A549 (cell line): ENCODE measurements at regions of chr5 and their contacts with region 1.

Region 1: GRCh38 chr5:136080483-136081216 is 51.9 kb downstream of the TGFBI start:
- DNase-seq: peak; percentile 43 to 85
- ATAC-seq: peak; percentile 62 to 63
- H3K4me3 ChIP-seq: peak overlapping the region; percentile 30
- H3K27ac ChIP-seq: peak overlapping the region; percentile 80 to 89
- H3K4me1 ChIP-seq: peaks cover 27% of the 10 kb centered on the region
- CTCF ChIP-seq: no peak
- EP300 ChIP-seq: no peak
- POLR2A ChIP-seq: peak; percentile 45
- RAD21 ChIP-seq: no peak

Region 2: DNA sequence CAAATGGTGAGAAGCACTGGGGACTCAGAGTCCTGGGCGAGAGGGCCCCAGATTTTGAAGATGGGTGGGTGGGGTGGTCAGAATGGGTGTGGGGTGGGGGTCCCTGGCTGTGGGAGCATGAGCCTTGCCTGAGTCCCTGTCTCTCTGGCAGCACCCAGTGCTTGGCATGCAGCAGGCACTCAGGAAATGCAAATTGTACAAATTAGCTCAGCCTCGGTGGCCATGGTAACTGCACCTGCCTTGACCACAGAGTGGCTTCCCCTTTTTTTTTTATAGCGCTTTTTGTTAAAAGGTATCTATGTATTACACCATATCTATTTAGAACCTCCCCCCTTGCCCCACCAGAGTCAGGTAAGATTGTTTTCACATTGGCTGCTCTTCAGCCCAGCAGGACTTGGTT is 1027.4 kb before region 1 on chr5:
- CTCF ChIA-PET with region 1: no interaction called
- POLR2A ChIA-PET with region 1: no interaction called
- DNase-seq: no peak
- ATAC-seq: no peak
- H3K4me3 ChIP-seq: no peak overlapping the region
- H3K27ac ChIP-seq: no peak overlapping the region
- H3K4me1 ChIP-seq: no peaks in the 10 kb centered on the region
- CTCF ChIP-seq: no peak
- EP300 ChIP-seq: no peak
- POLR2A ChIP-seq: no peak
- RAD21 ChIP-seq: no peak

Region 3: GRCh38 chr5:135880278-135880677 is 200.4 kb before region 1 on chr5:
- CTCF ChIA-PET with region 1: interaction called, 20 read pairs
- POLR2A ChIA-PET with region 1: no interaction called
- DNase-seq: peak; percentile 55 to 68
- ATAC-seq: peak; percentile 76 to 95
- H3K4me3 ChIP-seq: no peak overlapping the region
- H3K27ac ChIP-seq: peak overlapping the region in 1 of 2 experiments; percentile 40; a peak in 1 of 6 replicates
- H3K4me1 ChIP-seq: peaks cover 11% of the 10 kb centered on the region
- CTCF ChIP-seq: peak; percentile 56
- EP300 ChIP-seq: no peak
- POLR2A ChIP-seq: no peak
- RAD21 ChIP-seq: peak; percentile 58 to 82

Region 4: DNA sequence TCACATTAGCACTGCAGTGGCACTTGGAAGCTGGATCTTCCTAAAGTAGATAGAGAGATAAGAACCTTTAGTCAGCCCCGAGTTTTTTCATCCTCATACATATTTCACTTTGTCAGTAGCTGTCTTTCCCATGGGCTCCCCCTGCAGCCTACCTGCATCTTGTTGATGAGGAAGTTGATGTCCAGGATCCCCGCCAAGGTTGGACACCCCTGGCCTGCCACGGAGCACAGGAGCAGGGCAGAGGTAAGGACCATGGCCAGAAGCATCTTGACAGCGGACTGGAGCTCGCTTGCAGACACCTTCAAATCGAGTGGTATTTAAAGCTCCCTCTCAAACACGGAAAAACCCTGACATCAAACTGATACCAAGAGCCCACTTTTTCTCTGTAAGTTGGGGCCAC is 185.1 kb before region 1 on chr5 and contains the start of gene IL9:
- CTCF ChIA-PET with region 1: interaction called, 74 read pairs
- POLR2A ChIA-PET with region 1: no interaction called
- DNase-seq: no peak
- ATAC-seq: peak in 1 of 2 experiments; percentile 42; a peak in 3 of 6 replicates
- H3K4me3 ChIP-seq: no peak within 1 kb of the TSS
- H3K27ac ChIP-seq: peak within 1 kb of the TSS in 1 of 2 experiments; percentile 15; a peak in 2 of 6 replicates
- H3K4me1 ChIP-seq: peaks cover 25% of the 10 kb centered on the region
- CTCF ChIP-seq: no peak
- EP300 ChIP-seq: no peak
- POLR2A ChIP-seq: no peak
- RAD21 ChIP-seq: no peak
- polyA plus RNA-seq, gene IL9: not detected in 2 replicates

Region 5: GRCh38 chr5:136053336-136054141 is 27.1 kb before region 1 on chr5:
- CTCF ChIA-PET with region 1: interaction called, 10 read pairs
- POLR2A ChIA-PET with region 1: no interaction called
- DNase-seq: peak; percentile 94 to 95
- ATAC-seq: peak; percentile 54 to 73
- H3K4me3 ChIP-seq: 0 out of 3 replicates have a peak overlapping the region, but pooled peaks have one; percentile 17
- H3K27ac ChIP-seq: peak overlapping the region; percentile 86 to 93
- H3K4me1 ChIP-seq: peaks cover 94% of the 10 kb centered on the region
- CTCF ChIP-seq: no peak
- EP300 ChIP-seq: peak; percentile 91 to 96; a peak in 4 of 5 replicates
- POLR2A ChIP-seq: no peak
- RAD21 ChIP-seq: peak; percentile 22 to 43; a peak in 4 of 5 replicates

Region 6: DNA sequence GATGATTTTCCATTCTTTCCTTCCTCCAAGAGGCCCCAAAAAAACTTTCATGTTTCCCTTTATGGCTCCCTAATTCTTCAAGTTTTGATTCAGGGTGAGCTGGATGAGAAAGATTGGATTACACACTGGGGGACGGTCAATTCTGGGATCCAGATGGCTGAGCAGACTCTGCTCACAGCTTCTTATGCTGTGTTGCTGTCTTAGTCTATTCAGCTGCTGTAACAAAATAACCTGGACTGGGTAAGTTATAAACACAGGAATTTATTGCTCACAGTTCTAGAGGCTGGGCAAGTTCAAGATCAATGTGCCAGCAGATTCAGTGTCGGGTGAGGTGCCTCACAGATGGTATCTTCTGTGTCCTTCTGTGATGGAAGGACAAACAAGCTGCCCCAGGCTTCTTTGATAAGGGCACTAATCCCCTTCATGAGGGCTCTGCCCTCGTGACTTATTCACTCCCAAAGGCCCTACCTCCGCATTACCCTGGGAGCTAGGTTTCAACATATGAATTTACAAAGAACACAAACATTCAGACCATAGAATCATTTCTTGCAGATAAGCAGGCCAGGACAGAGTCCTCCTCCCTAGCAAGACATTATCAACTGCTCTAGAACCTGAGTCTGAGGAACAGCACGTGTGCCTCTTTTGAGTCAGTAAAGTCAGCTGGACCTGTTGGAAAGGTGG is 28.9 kb after region 1 on chr5:
- CTCF ChIA-PET with region 1: interaction called, 26 read pairs
- POLR2A ChIA-PET with region 1: no interaction called
- DNase-seq: no peak
- ATAC-seq: no peak
- H3K4me3 ChIP-seq: no peak overlapping the region
- H3K27ac ChIP-seq: no peak overlapping the region
- H3K4me1 ChIP-seq: no peaks in the 10 kb centered on the region
- CTCF ChIP-seq: no peak
- EP300 ChIP-seq: no peak
- POLR2A ChIP-seq: no peak
- RAD21 ChIP-seq: no peak